ENCODE measurements at regions of chr2 and their contacts with region 1.

Region 1: GRCh38 chr2:164737612-164738081 is 104.0 kb downstream of the COBLL1 start:
- DNase-seq: peak; percentile 71
- H3K4me3 ChIP-seq: no peak overlapping the region
- H3K27ac ChIP-seq: no peak overlapping the region
- H3K4me1 ChIP-seq: no peaks in the 10 kb centered on the region
- H3K27me3 ChIP-seq: no peaks in the 10 kb centered on the region
- CTCF ChIP-seq: peak; percentile 55 to 77 (median 74)
- POLR2A ChIP-seq: no peak

Region 2: GRCh38 chr2:164910101-164910899 is 172.7 kb after region 1 on chr2:
- intact Hi-C with region 1: loop called (anchors 5 kb)
- DNase-seq: no peak
- H3K4me3 ChIP-seq: no peak overlapping the region
- H3K27ac ChIP-seq: no peak overlapping the region
- H3K4me1 ChIP-seq: peaks cover 21% of the 10 kb centered on the region
- H3K27me3 ChIP-seq: no peaks in the 10 kb centered on the region
- CTCF ChIP-seq: no peak
- POLR2A ChIP-seq: no peak

Region 3: DNA sequence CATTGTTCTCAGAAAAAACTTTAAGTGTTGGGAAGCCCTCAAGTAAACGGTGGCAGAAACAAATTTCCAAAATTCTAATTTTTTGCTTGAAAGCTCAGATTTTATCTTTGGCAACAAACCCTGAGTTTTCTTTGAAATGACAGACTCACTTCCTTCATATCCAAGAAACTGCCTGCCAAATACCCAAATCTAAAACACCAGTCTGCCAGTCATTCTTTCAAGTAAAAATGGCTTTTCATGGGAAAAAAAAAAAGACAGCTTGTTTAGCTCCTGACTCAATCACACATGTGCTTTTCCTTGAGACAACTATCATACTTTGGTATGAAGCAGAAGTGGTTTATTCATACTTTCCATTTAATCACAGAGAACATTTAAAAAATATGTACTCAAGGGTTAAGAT is 691.3 kb after region 1 on chr2:
- intact Hi-C with region 1: no loop called
- DNase-seq: no peak
- H3K4me3 ChIP-seq: no peak overlapping the region
- H3K27ac ChIP-seq: no peak overlapping the region
- H3K4me1 ChIP-seq: no peaks in the 10 kb centered on the region
- H3K27me3 ChIP-seq: no peaks in the 10 kb centered on the region
- CTCF ChIP-seq: no peak
- POLR2A ChIP-seq: no peak

Region 4: DNA sequence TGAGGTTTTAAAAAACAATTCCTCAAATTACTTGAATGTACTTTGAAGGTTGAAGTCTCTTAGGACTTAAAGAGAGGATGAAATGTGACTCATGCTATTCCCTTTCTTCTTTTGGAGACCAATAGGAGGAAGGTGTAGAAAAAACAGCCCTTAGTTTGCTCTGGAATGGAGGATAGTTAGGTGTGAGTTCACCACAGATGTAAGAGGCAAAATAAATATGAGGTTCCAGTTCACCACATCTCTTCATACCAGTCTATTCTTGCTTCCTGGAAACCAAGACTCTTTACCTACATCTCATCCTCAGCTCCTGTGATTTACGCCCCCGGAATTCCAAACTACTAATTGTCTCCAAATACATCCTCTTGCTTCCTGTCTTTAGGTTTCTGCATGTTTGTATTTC is 1293.4 kb after region 1 on chr2:
- intact Hi-C with region 1: no loop called
- DNase-seq: no peak
- H3K4me3 ChIP-seq: no peak overlapping the region
- H3K27ac ChIP-seq: no peak overlapping the region
- H3K4me1 ChIP-seq: no peaks in the 10 kb centered on the region
- H3K27me3 ChIP-seq: no peaks in the 10 kb centered on the region
- CTCF ChIP-seq: no peak
- POLR2A ChIP-seq: no peak